ENCODE measurements at regions of chr14 and their contacts with region 1.

Region 1: GRCh38 chr14:63770187-63770807 is 42.4 kb upstream of the SGPP1 start:
- DNase-seq: peak in 7 of 9 donors; percentile 37 to 71 (median 62)
- ATAC-seq: peak; percentile 89
- H3K4me3 ChIP-seq: no peak overlapping the region
- H3K4me3 Mint-ChIP-seq: no peak overlapping the region
- H3K27ac ChIP-seq: no peak overlapping the region
- H3K27ac Mint-ChIP-seq: peak overlapping the region in 2 of 9 donors; percentile 4 to 5
- H3K4me1 ChIP-seq: peaks cover 0 to 4% of the 10 kb centered on the region in 2 donors
- H3K4me1 Mint-ChIP-seq: peaks cover 0 to 20% (median 9%) of the 10 kb centered on the region in 7 donors
- H3K27me3 ChIP-seq: no peaks in the 10 kb centered on the region
- H3K27me3 Mint-ChIP-seq: peaks cover 0 to 4% (median 0%) of the 10 kb centered on the region in 5 donors

Region 2: DNA sequence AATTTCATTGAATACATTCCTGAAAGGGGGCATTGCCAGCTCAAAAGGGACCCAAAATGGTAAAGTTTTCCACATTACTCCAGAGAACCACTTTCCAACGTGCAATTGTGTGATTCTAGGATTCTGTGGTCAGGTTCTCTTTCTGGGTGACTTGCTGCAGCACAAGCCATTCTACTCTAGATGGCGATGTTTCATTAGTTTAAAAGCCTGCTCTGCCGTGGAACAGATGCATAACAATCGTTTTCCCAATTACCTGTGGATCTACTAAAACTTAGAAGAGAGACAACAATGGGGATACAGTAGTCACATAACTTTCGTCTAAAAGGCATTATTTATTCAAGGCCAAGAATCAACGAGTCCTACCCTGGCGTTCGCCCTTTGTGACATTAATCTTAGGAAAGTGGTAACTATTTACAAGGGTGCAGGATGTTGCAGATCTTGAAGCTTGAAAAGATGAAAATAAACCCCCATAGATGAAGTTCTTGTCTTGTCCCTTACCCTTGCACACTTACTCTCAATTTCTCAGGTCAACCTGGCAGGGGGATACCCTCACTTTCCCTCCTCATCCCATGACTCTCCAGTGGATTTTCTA is 1607.2 kb before region 1 on chr14:
- CTCF ChIA-PET with region 1: no interaction called
- POLR2A ChIA-PET with region 1: no interaction called
- intact Hi-C with region 1: loop called in 1 of 2 experiments (anchors 10 kb)
- DNase-seq: peak in 6 of 9 donors; percentile 3 to 23 (median 12)
- ATAC-seq: no peak
- H3K4me3 ChIP-seq: no peak overlapping the region
- H3K4me3 Mint-ChIP-seq: no peak overlapping the region
- H3K27ac ChIP-seq: no peak overlapping the region
- H3K27ac Mint-ChIP-seq: no peak overlapping the region
- H3K4me1 ChIP-seq: no peaks in the 10 kb centered on the region
- H3K4me1 Mint-ChIP-seq: no peaks in the 10 kb centered on the region
- H3K27me3 ChIP-seq: no peaks in the 10 kb centered on the region
- H3K27me3 Mint-ChIP-seq: peaks cover 18 to 66% (median 47%) of the 10 kb centered on the region in 5 donors

Region 3: DNA sequence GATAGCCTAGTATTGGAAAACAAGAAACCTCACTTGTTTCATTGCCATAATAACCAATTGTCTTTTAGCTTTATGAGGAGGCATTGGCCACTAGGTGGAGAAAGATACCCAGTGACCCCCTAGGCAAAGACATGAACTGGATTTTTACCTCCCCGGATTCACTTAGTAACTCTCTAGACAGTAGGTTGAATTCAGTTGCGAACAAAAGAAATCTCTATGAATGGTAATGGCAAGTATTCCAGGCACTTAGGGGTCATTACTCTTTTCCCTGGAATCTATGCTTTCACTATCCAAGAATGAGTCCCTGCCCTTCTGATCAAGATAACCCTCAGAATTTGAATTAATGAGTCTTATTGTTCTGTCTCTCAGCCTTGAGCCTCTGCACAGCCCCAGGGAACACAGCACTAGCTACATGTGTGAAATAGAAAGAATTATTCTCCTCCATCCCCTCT is 595.5 kb before region 1 on chr14:
- CTCF ChIA-PET with region 1: no interaction called
- POLR2A ChIA-PET with region 1: no interaction called
- intact Hi-C with region 1: loop called in 1 of 2 experiments (anchors 5 kb)
- DNase-seq: no peak
- ATAC-seq: no peak
- H3K4me3 ChIP-seq: no peak overlapping the region
- H3K4me3 Mint-ChIP-seq: no peak overlapping the region
- H3K27ac ChIP-seq: no peak overlapping the region
- H3K27ac Mint-ChIP-seq: no peak overlapping the region
- H3K4me1 ChIP-seq: no peaks in the 10 kb centered on the region
- H3K4me1 Mint-ChIP-seq: no peaks in the 10 kb centered on the region
- H3K27me3 ChIP-seq: no peaks in the 10 kb centered on the region
- H3K27me3 Mint-ChIP-seq: peaks cover 0 to 19% (median 5%) of the 10 kb centered on the region in 5 donors

Region 4: GRCh38 chr14:63388763-63389431 is 381.4 kb before region 1 on chr14:
- CTCF ChIA-PET with region 1: interaction called, 20 read pairs
- POLR2A ChIA-PET with region 1: no interaction called
- intact Hi-C with region 1: loop called in 1 of 2 experiments (anchors 1 kb)
- DNase-seq: peak in 8 of 9 donors; percentile 4 to 52 (median 24)
- ATAC-seq: peak; percentile 86
- H3K4me3 ChIP-seq: no peak overlapping the region
- H3K4me3 Mint-ChIP-seq: no peak overlapping the region
- H3K27ac ChIP-seq: no peak overlapping the region
- H3K27ac Mint-ChIP-seq: peak overlapping the region in 1 of 9 donors; percentile 43
- H3K4me1 ChIP-seq: no peaks in the 10 kb centered on the region
- H3K4me1 Mint-ChIP-seq: peaks cover 0 to 9% (median under 1%) of the 10 kb centered on the region in 7 donors
- H3K27me3 ChIP-seq: no peaks in the 10 kb centered on the region
- H3K27me3 Mint-ChIP-seq: no peaks in the 10 kb centered on the region

Region 5: GRCh38 chr14:63632932-63633514 is 137.3 kb before region 1 on chr14:
- CTCF ChIA-PET with region 1: interaction called, 40 read pairs
- POLR2A ChIA-PET with region 1: interaction called, 7 read pairs
- intact Hi-C with region 1: loop called (anchors 1 kb)
- DNase-seq: peak in 6 of 9 donors; percentile 31 to 65 (median 58)
- ATAC-seq: peak; percentile 92
- H3K4me3 ChIP-seq: no peak overlapping the region
- H3K4me3 Mint-ChIP-seq: no peak overlapping the region
- H3K27ac ChIP-seq: no peak overlapping the region
- H3K27ac Mint-ChIP-seq: peak overlapping the region in 3 of 9 donors; percentile 5 to 64 (median 42)
- H3K4me1 ChIP-seq: peaks cover 0 to 7% of the 10 kb centered on the region in 2 donors
- H3K4me1 Mint-ChIP-seq: peaks cover 29 to 78% (median 63%) of the 10 kb centered on the region in 7 donors
- H3K27me3 ChIP-seq: no peaks in the 10 kb centered on the region
- H3K27me3 Mint-ChIP-seq: no peaks in the 10 kb centered on the region

Region 6: DNA sequence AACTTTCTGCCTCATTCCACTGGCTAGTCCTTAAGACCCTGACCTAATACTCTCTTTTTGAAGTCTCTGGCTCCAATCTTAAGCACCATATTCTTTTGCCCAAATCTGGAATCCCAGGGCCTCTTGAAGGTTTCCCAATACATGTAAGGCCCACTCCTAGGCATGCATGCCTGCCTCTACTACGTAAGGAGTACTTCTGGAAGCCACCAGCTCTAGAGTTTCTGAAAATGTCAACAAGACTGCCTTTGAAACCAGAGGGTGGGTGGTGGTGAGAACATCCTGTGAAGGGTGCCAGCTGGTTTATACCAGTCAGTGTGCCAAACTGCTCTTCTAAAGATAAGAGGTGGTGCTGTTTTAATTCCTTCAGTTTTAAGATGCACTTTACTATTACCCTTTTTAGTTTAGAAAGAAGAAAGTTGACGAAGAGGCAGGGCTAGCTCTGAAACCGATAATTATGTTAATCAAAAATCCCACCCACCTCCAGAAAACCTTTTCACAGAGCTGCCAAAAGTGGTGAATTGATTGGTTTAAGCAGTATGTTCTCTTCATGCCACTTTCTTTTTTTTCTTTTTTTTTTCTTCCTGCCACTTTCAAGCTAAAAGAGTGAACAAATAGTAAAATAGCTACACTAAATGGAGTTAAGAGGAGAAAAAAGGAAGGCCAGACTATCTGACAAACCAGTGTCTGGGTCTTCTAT is 119.9 kb before region 1 on chr14:
- CTCF ChIA-PET with region 1: interaction called, 18 read pairs
- POLR2A ChIA-PET with region 1: interaction called, 3 read pairs
- intact Hi-C with region 1: loop called in 1 of 2 experiments (anchors 1 kb)
- DNase-seq: peak in 7 of 9 donors; percentile 76 to 92 (median 87)
- ATAC-seq: peak; percentile 98
- H3K4me3 ChIP-seq: peak overlapping the region; percentile 3
- H3K4me3 Mint-ChIP-seq: peak overlapping the region; percentile 38 to 95 (median 75)
- H3K27ac ChIP-seq: peak overlapping the region; percentile 89
- H3K27ac Mint-ChIP-seq: peak overlapping the region; percentile 90 to 100 (median 100)
- H3K4me1 ChIP-seq: peaks cover 25 to 45% of the 10 kb centered on the region in 2 donors
- H3K4me1 Mint-ChIP-seq: peaks cover 21 to 69% (median 53%) of the 10 kb centered on the region in 7 donors
- H3K27me3 ChIP-seq: no peaks in the 10 kb centered on the region
- H3K27me3 Mint-ChIP-seq: no peaks in the 10 kb centered on the region

Region 7: GRCh38 chr14:63759456-63759855 is 10.8 kb before region 1 on chr14:
- CTCF ChIA-PET with region 1: interaction called, 7 read pairs
- POLR2A ChIA-PET with region 1: no interaction called
- intact Hi-C with region 1: loop called in 1 of 2 experiments (anchors 1 kb)
- DNase-seq: peak in 7 of 9 donors; percentile 24 to 61 (median 50)
- ATAC-seq: peak; percentile 89
- H3K4me3 ChIP-seq: peak overlapping the region; percentile 2
- H3K4me3 Mint-ChIP-seq: peak overlapping the region; percentile 57 to 89 (median 82)
- H3K27ac ChIP-seq: peak overlapping the region; percentile 75
- H3K27ac Mint-ChIP-seq: peak overlapping the region; percentile 84 to 98 (median 93)
- H3K4me1 ChIP-seq: peaks cover 4 to 8% of the 10 kb centered on the region in 2 donors
- H3K4me1 Mint-ChIP-seq: peaks cover 11 to 19% (median 17%) of the 10 kb centered on the region in 7 donors
- H3K27me3 ChIP-seq: no peaks in the 10 kb centered on the region
- H3K27me3 Mint-ChIP-seq: no peaks in the 10 kb centered on the region

Region 8: GRCh38 chr14:64459405-64460145 is 689.3 kb after region 1 on chr14:
- CTCF ChIA-PET with region 1: no interaction called
- POLR2A ChIA-PET with region 1: no interaction called
- intact Hi-C with region 1: no loop called
- DNase-seq: no peak
- ATAC-seq: no peak
- H3K4me3 ChIP-seq: no peak overlapping the region
- H3K4me3 Mint-ChIP-seq: no peak overlapping the region
- H3K27ac ChIP-seq: no peak overlapping the region
- H3K27ac Mint-ChIP-seq: peak overlapping the region in 4 of 9 donors; percentile 17 to 71 (median 44)
- H3K4me1 ChIP-seq: peaks cover 2 to 3% of the 10 kb centered on the region in 2 donors
- H3K4me1 Mint-ChIP-seq: peaks cover 3 to 24% (median 9%) of the 10 kb centered on the region in 7 donors
- H3K27me3 ChIP-seq: no peaks in the 10 kb centered on the region
- H3K27me3 Mint-ChIP-seq: no peaks in the 10 kb centered on the region